ENCODE measurements at regions of chr11 and their contacts with region 1.

Region 1: DNA sequence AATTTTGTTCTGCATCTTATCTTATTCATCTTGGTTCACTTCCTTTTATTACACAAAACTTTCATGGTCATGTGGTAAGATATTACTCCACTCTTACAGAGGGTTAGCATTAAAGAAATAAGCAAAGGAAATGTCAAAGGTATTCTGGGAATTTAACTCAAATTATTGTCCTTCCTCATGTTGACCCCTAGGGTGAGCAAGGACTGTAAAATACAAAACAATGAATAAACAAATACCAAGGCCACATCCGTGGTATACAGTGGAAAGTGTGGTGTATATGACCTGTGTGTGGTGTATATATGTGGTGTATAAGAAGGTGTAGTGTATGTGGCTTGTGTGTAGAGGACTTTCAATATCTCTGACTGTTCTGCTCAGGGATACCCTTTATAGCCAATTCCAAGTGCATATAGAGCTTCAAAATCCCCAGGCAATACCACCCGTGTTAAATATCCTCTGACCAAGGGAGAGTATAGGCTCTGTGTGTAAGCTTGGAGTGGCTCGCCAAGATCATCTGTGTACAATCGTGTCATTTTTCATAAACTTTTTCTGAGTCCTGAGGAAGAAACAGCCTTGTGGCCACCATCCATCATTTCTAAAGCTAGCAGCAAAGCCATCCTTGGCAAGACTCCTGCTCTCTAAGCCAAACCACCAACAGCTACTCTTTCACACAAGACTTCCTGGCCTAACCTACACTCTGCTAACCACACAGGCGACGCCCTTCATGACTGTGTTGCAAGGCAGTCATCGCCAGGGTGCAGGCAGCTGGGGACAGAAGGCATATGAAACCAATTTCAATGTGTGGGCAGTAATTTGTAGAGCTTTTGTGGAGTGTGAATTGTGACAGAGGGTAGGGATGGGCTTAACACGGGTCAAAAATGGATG is 548.0 kb downstream of the ETS1 start:
- DNase-seq: no peak

Region 2: DNA sequence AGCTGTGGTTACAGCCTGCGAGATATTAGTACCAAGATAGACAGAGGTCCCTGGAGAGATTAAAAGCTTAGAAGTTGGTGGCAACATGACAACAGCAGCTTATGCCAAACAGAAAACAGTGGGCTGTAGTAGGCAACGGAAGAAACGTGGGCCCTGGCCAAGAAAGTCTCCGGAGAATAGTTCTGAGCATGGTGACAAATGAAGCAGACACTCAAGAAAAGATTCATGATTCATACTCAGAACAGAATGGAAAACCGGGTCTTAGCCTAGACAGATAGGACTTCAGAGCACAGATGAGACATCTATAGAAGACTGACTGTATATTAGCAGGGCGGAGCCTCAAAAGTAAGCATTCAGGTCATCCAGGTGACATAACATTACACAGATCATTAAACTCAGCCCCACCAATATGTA is 179.4 kb before region 1 on chr11:
- intact Hi-C with region 1: no loop called
- DNase-seq: no peak

Region 3: GRCh38 chr11:128831174-128832120 is 792.1 kb after region 1 on chr11:
- intact Hi-C with region 1: loop called (anchors 10 kb)
- DNase-seq: peak; percentile 44 to 94 (median 84)